ENCODE measurements at regions of chr15 and their contacts with region 1.

Region 1: DNA sequence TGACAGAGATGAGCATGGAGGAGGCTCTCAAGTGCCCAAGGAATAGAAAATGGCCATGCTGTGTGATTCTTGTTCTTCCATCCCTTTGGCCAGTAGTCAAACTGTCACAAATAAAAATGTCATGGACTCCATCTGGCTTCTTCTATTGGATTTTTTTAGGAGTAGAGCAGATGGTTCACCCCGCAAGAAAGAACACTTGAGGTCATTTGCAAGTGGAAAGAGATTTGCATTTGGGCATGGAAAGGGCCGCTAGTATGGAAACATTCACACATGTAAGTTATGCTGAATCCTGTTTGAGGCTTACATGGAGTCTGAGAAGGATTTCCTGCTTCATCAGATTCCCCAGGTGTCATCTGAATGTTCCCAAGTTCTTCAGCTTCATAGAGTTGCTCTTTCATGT is 53.1 kb upstream of the CFAP161 start:
- DNase-seq: no peak
- ATAC-seq: no peak
- H3K4me3 ChIP-seq: no peak overlapping the region
- H3K27ac ChIP-seq: no peak overlapping the region
- H3K4me1 ChIP-seq: peaks cover 0 to 7% (median 0%) of the 10 kb centered on the region in 12 donors
- H3K27me3 ChIP-seq: no peaks in the 10 kb centered on the region
- CTCF ChIP-seq: no peak
- POLR2A ChIP-seq: no peak

Region 2: GRCh38 chr15:80953936-80954778 is 126.8 kb before region 1 on chr15:
- intact Hi-C with region 1: no loop called
- DNase-seq: no peak
- ATAC-seq: peak in 1 of 4 donors; percentile 15
- H3K4me3 ChIP-seq: no peak overlapping the region
- H3K27ac ChIP-seq: no peak overlapping the region
- H3K4me1 ChIP-seq: peaks cover 0 to 10% (median 0%) of the 10 kb centered on the region in 12 donors
- H3K27me3 ChIP-seq: no peaks in the 10 kb centered on the region
- CTCF ChIP-seq: no peak
- POLR2A ChIP-seq: no peak

Region 3: GRCh38 chr15:81049835-81050234 is 31.2 kb before region 1 on chr15:
- intact Hi-C with region 1: loop called in 1 of 10 experiments (anchors 5 kb)
- DNase-seq: no peak
- ATAC-seq: no peak
- H3K4me3 ChIP-seq: no peak overlapping the region
- H3K27ac ChIP-seq: no peak overlapping the region
- H3K4me1 ChIP-seq: peaks cover 0 to 10% (median 0%) of the 10 kb centered on the region in 12 donors
- H3K27me3 ChIP-seq: no peaks in the 10 kb centered on the region
- CTCF ChIP-seq: no peak
- POLR2A ChIP-seq: no peak

Measured in heart left ventricle (tissue), 16 donors.